ENCODE measurements at regions of chr6 and their contacts with region 1.

Region 1: GRCh38 chr6:93366506-93366905 is 52.9 kb downstream of the EPHA7 start:
- DNase-seq: no peak
- ATAC-seq: no peak
- H3K4me3 ChIP-seq: no peak overlapping the region
- H3K4me3 Mint-ChIP-seq: no peak overlapping the region
- H3K27ac ChIP-seq: no peak overlapping the region
- H3K27ac Mint-ChIP-seq: no peak overlapping the region
- H3K4me1 ChIP-seq: no peaks in the 10 kb centered on the region
- H3K4me1 Mint-ChIP-seq: no peaks in the 10 kb centered on the region
- H3K27me3 ChIP-seq: no peaks in the 10 kb centered on the region
- H3K27me3 Mint-ChIP-seq: no peaks in the 10 kb centered on the region
- CTCF ChIP-seq: no peak

Region 2: GRCh38 chr6:93036835-93037234 is 329.7 kb before region 1 on chr6:
- CTCF ChIA-PET with region 1: no interaction called
- POLR2A ChIA-PET with region 1: no interaction called
- intact Hi-C with region 1: no loop called
- DNase-seq: no peak
- ATAC-seq: no peak
- H3K4me3 ChIP-seq: no peak overlapping the region
- H3K4me3 Mint-ChIP-seq: no peak overlapping the region
- H3K27ac ChIP-seq: no peak overlapping the region
- H3K27ac Mint-ChIP-seq: no peak overlapping the region
- H3K4me1 ChIP-seq: no peaks in the 10 kb centered on the region
- H3K4me1 Mint-ChIP-seq: no peaks in the 10 kb centered on the region
- H3K27me3 ChIP-seq: no peaks in the 10 kb centered on the region
- H3K27me3 Mint-ChIP-seq: no peaks in the 10 kb centered on the region
- CTCF ChIP-seq: no peak

Region 3: GRCh38 chr6:93196406-93196970 is 170.0 kb before region 1 on chr6:
- CTCF ChIA-PET with region 1: no interaction called
- POLR2A ChIA-PET with region 1: no interaction called
- intact Hi-C with region 1: no loop called
- DNase-seq: no peak
- ATAC-seq: no peak
- H3K4me3 ChIP-seq: no peak overlapping the region
- H3K4me3 Mint-ChIP-seq: no peak overlapping the region
- H3K27ac ChIP-seq: no peak overlapping the region
- H3K27ac Mint-ChIP-seq: no peak overlapping the region
- H3K4me1 ChIP-seq: no peaks in the 10 kb centered on the region
- H3K4me1 Mint-ChIP-seq: no peaks in the 10 kb centered on the region
- H3K27me3 ChIP-seq: no peaks in the 10 kb centered on the region
- H3K27me3 Mint-ChIP-seq: no peaks in the 10 kb centered on the region
- CTCF ChIP-seq: no peak

Region 4: DNA sequence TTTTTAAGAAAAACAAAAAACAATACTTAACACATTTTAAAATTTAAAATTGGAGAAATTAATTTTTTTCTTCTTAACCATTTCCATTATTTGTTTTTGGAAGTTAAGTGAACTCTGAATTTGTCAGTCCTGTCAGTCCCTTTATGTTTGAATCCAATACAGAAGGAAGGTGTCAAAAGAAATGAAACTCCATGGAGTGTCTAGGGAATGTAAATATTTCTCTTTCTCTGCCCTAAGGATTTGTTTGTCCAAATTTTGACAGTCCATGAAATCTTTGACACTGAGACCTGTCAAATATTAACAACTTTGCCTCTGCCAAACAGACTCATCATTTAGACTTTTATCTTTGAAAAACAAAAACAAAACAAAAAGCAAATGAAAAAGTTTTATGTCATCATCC is 113.6 kb before region 1 on chr6:
- CTCF ChIA-PET with region 1: no interaction called
- POLR2A ChIA-PET with region 1: no interaction called
- intact Hi-C with region 1: loop called in 1 of 2 experiments (anchors 5 kb)
- DNase-seq: no peak
- ATAC-seq: no peak
- H3K4me3 ChIP-seq: no peak overlapping the region
- H3K4me3 Mint-ChIP-seq: no peak overlapping the region
- H3K27ac ChIP-seq: no peak overlapping the region
- H3K27ac Mint-ChIP-seq: no peak overlapping the region
- H3K4me1 ChIP-seq: no peaks in the 10 kb centered on the region
- H3K4me1 Mint-ChIP-seq: no peaks in the 10 kb centered on the region
- H3K27me3 ChIP-seq: no peaks in the 10 kb centered on the region
- H3K27me3 Mint-ChIP-seq: no peaks in the 10 kb centered on the region
- CTCF ChIP-seq: no peak